Activated CD4-positive, alpha-beta T cell treated with anti-CD3 and anti-CD28 coated beads, Interleukin-2, amount 10 ng/mL, durations not matched to agents 24 days and 14 days (primary cell): ENCODE measurements at regions of chr9 and their contacts with region 1.

Region 1: GRCh38 chr9:129610473-129611301 is 10.2 kb downstream of the C9orf50 start:
- DNase-seq: peak; percentile 92
- H3K4me3 Mint-ChIP-seq: peak overlapping the region; percentile 84
- H3K27ac Mint-ChIP-seq: peak overlapping the region; percentile 89
- H3K4me1 Mint-ChIP-seq: peaks cover 35% of the 10 kb centered on the region
- H3K27me3 Mint-ChIP-seq: peaks cover 5% of the 10 kb centered on the region

Region 2: GRCh38 chr9:129320575-129321263 is 290.0 kb before region 1 on chr9:
- intact Hi-C with region 1: loop called (anchors 10 kb)
- DNase-seq: peak; percentile 87
- H3K4me3 Mint-ChIP-seq: peak overlapping the region; percentile 81
- H3K27ac Mint-ChIP-seq: peak overlapping the region; percentile 89
- H3K4me1 Mint-ChIP-seq: peaks cover 15% of the 10 kb centered on the region
- H3K27me3 Mint-ChIP-seq: peaks cover 1% of the 10 kb centered on the region

Region 3: GRCh38 chr9:129570450-129571297 is 40.0 kb before region 1 on chr9:
- intact Hi-C with region 1: no loop called
- DNase-seq: no peak
- H3K4me3 Mint-ChIP-seq: no peak overlapping the region
- H3K27ac Mint-ChIP-seq: peak overlapping the region; percentile 52
- H3K4me1 Mint-ChIP-seq: peaks cover 23% of the 10 kb centered on the region
- H3K27me3 Mint-ChIP-seq: peaks cover 20% of the 10 kb centered on the region

Region 4: GRCh38 chr9:129597355-129598088 is 13.2 kb before region 1 on chr9:
- intact Hi-C with region 1: no loop called
- DNase-seq: peak; percentile 84
- H3K4me3 Mint-ChIP-seq: peak overlapping the region; percentile 62
- H3K27ac Mint-ChIP-seq: peak overlapping the region; percentile 58
- H3K4me1 Mint-ChIP-seq: peaks cover 31% of the 10 kb centered on the region
- H3K27me3 Mint-ChIP-seq: peaks cover 4% of the 10 kb centered on the region

Region 5: DNA sequence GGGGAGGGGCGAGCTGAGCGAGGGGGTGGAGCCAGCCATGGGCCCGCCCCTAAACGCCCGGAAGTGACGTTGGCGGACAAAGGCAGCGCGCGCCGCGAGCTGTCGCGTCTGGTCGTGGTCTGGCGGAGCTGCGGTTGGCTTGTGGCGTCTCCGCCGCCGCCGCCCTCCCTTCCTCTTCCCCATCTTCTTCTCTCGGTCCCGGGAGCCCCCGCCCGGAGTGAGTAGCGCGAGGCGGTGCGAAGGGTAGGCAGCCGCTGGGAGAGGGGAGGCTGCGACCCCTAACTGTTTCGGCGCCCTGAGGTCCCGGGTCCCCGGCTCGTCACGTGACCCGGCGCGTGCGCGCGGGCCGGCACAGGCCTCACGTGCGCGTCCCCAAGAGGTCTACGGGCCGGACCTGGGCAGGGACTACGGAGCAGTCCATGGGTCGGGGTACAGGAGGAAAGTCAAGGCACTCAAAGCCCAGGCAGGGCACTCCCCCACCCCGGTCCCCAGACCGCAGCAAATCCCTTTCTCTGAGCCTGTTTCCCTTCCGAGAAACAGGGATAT is 15.5 kb after region 1 on chr9 and contains the start of gene NTMT1:
- intact Hi-C with region 1: loop called (anchors 2 kb)
- DNase-seq: peak; percentile 97
- H3K4me3 Mint-ChIP-seq: peak within 1 kb of the TSS; percentile 83
- H3K27ac Mint-ChIP-seq: peak within 1 kb of the TSS; percentile 93
- H3K4me1 Mint-ChIP-seq: peaks cover 33% of the 10 kb centered on the region
- H3K27me3 Mint-ChIP-seq: peaks cover 8% of the 10 kb centered on the region
- total RNA-seq, gene NTMT1: 72.0 and 72.4 TPM in 2 replicates